ENCODE measurements at regions of chr6 and their contacts with region 1.

Region 1: GRCh38 chr6:21769405-21769861 is 175.9 kb downstream of the SOX4 start:
- DNase-seq: peak; percentile 94
- H3K4me3 ChIP-seq: no peak overlapping the region
- H3K27ac ChIP-seq: peak overlapping the region; percentile 98
- H3K4me1 ChIP-seq: peaks cover 53% of the 10 kb centered on the region
- H3K27me3 ChIP-seq: no peaks in the 10 kb centered on the region
- CTCF ChIP-seq: no peak
- POLR2A ChIP-seq: no peak

Region 2: DNA sequence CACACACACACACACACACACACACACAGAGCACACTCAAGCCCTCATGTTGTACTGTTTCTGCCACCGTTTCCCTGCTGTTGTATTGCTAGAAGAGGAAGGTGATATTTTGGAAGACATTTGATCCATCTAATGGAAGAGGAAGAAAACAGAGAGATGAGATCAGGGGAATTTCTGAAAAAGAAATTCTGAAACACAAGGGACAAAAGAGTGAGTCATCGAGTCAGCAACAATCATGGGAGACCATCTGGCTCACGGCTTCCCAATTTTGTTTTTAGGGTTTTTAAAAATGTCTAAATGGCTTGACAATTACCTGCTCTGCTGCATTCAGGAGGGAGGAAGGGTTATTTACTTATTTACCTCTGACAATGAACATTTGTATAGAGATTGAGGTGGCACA is 153.9 kb before region 1 on chr6:
- CTCF ChIA-PET with region 1: no interaction called
- POLR2A ChIA-PET with region 1: no interaction called
- dilution Hi-C with region 1: no loop called
- intact Hi-C with region 1: loop called (anchors 5 kb)
- DNase-seq: peak; percentile 89
- H3K4me3 ChIP-seq: no peak overlapping the region
- H3K27ac ChIP-seq: peak overlapping the region; percentile 87
- H3K4me1 ChIP-seq: peaks cover 20% of the 10 kb centered on the region
- H3K27me3 ChIP-seq: no peaks in the 10 kb centered on the region
- CTCF ChIP-seq: no peak
- POLR2A ChIP-seq: no peak

Region 3: GRCh38 chr6:21742238-21742660 is 27.2 kb before region 1 on chr6:
- CTCF ChIA-PET with region 1: interaction called, 28 read pairs
- POLR2A ChIA-PET with region 1: interaction called, 4 read pairs
- dilution Hi-C with region 1: no loop called
- intact Hi-C with region 1: loop called (anchors 1 kb)
- DNase-seq: peak; percentile 89
- H3K4me3 ChIP-seq: peak overlapping the region in 1 of 3 experiments; percentile 53
- H3K27ac ChIP-seq: peak overlapping the region; percentile 95
- H3K4me1 ChIP-seq: peaks cover 37% of the 10 kb centered on the region
- H3K27me3 ChIP-seq: no peaks in the 10 kb centered on the region
- CTCF ChIP-seq: no peak
- POLR2A ChIP-seq: no peak

Region 4: DNA sequence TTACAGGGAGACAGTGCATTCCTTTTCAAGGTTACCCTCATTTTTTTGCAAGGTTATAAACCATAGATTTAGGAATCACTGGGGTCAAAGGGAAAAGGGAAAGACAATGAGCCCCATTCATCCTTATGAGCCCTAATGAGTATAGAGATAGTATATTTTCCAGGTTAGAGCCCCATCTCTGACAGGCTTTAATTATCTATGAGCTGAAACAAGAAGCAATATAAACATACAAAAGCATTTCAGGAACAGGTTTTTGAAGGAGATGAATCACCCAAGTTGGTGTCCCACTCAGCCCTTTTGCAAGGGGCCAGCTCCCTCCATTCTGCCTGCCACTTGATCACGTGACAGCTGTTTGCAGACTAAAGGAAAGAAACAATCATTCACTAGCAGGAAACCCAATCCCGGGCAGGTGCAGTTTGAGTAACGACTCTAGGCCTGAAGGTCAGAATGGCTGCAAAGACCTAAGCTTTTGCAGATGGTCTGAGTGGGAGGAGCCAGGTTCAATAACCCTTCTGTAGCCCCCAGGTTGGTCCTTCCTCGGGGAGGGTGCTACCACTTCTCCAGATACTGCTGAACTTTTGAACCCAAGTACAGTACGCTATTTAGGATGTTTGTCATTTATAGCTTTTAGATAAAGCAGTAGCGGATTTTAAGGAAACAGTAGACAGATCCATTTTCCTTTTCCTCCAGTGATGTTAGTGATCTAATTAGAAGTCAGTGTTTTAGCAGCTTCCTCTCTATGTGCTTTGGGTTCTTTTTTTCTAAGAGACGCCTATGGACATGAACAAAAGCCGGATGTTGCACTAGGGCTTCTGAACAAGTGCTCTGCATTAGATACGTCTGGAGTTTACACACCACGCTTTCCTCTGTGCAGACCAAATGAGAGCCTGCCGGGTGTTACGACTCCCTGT is 77.4 kb after region 1 on chr6:
- CTCF ChIA-PET with region 1: interaction called, 8 read pairs
- POLR2A ChIA-PET with region 1: interaction called, 6 read pairs
- dilution Hi-C with region 1: no loop called
- intact Hi-C with region 1: loop called (anchors 1 kb)
- DNase-seq: peak; percentile 96
- H3K4me3 ChIP-seq: peak overlapping the region in 1 of 3 experiments; percentile 27
- H3K27ac ChIP-seq: peak overlapping the region; percentile 98
- H3K4me1 ChIP-seq: peaks cover 54% of the 10 kb centered on the region
- H3K27me3 ChIP-seq: no peaks in the 10 kb centered on the region
- CTCF ChIP-seq: no peak
- POLR2A ChIP-seq: peak; percentile 30

Region 5: DNA sequence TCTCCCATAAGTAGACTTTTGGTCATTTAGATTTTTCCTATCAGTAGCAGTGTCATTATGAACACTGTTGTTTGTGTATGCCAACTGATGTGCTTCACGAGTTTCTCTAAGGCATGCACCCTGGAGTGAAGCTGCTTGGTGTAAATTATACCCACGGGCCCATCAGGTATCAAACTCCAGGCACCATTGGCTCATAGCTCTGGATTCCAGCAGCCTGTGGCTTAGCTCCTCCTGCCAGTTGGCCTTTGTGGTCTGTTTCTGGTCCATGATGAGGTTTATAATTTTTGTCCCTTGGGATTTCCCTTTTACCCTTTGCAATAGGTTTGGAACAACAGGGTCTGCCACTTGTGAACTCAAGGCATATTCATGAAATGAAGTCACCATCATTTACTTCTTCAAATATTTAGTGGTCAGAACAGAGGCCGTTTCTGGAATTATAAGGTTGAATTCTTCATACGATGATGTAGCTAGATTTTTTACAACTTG is 176.9 kb after region 1 on chr6:
- CTCF ChIA-PET with region 1: no interaction called
- POLR2A ChIA-PET with region 1: no interaction called
- dilution Hi-C with region 1: no loop called
- intact Hi-C with region 1: loop called (anchors 2 kb)
- DNase-seq: no peak
- H3K4me3 ChIP-seq: no peak overlapping the region
- H3K27ac ChIP-seq: no peak overlapping the region
- H3K4me1 ChIP-seq: peaks cover 51% of the 10 kb centered on the region
- H3K27me3 ChIP-seq: no peaks in the 10 kb centered on the region
- CTCF ChIP-seq: no peak
- POLR2A ChIP-seq: no peak

Region 6: GRCh38 chr6:22145823-22146677 is 376.6 kb after region 1 on chr6:
- CTCF ChIA-PET with region 1: no interaction called
- POLR2A ChIA-PET with region 1: no interaction called
- dilution Hi-C with region 1: no loop called
- intact Hi-C with region 1: loop called (anchors 2 kb)
- DNase-seq: peak; percentile 69
- H3K4me3 ChIP-seq: no peak overlapping the region
- H3K27ac ChIP-seq: no peak overlapping the region
- H3K4me1 ChIP-seq: peaks cover 36% of the 10 kb centered on the region
- H3K27me3 ChIP-seq: no peaks in the 10 kb centered on the region
- CTCF ChIP-seq: no peak
- POLR2A ChIP-seq: no peak